H1 (cell line): ENCODE measurements at regions of chr4 and their contacts with region 1.

Region 1: DNA sequence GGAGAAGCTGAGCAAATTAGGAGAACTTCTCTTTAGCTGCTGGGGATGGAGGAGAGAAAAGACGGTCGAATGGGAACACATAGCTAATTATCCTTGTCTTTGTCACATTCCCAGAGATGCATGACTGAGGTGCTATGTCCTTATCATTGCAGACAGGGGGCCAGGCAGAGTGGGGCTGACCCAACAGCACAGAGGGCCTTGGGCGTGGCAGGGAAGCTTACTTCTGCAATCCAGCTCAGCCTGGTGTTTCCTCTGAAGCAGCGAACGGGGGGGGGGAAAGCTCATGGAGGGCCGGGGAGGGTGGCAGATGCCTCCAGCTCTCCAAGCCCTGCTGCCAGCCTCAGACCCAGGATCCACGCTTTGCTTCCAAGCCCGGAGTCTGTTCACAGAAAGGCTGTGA is 50.8 kb upstream of the HOPX start:
- DNase-seq: no peak
- H3K4me3 ChIP-seq: no peak overlapping the region
- H3K27ac ChIP-seq: no peak overlapping the region
- H3K4me1 ChIP-seq: no peaks in the 10 kb centered on the region
- H3K27me3 ChIP-seq: no peaks in the 10 kb centered on the region
- CTCF ChIP-seq: peak in 1 of 3 experiments; percentile 12; a peak in 1 of 4 replicates
- EP300 ChIP-seq: no peak
- POLR2A ChIP-seq: no peak
- RAD21 ChIP-seq: no peak

Region 2: GRCh38 chr4:56762497-56763250 is 30.8 kb after region 1 on chr4:
- CTCF ChIA-PET with region 1: interaction called, 11 read pairs
- POLR2A ChIA-PET with region 1: no interaction called
- DNase-seq: no peak
- H3K4me3 ChIP-seq: no peak overlapping the region
- H3K27ac ChIP-seq: no peak overlapping the region
- H3K4me1 ChIP-seq: peaks cover 3 to 7% (median 4%) of the 10 kb centered on the region in 4 experiments; a peak in 6 of 7 replicates
- H3K27me3 ChIP-seq: no peaks in the 10 kb centered on the region; a peak in 1 of 7 replicates
- CTCF ChIP-seq: peak in 2 of 3 experiments; percentile 14 to 30; a peak in 3 of 4 replicates
- EP300 ChIP-seq: no peak
- POLR2A ChIP-seq: no peak
- RAD21 ChIP-seq: peak; percentile 26 to 38